ENCODE measurements at regions of chrX and their contacts with region 1.

Region 1: GRCh38 chrX:10189317-10190268 is 32.8 kb downstream of the CLCN4 start:
- DNase-seq: no peak
- ATAC-seq: peak; percentile 87

Region 2: GRCh38 chrX:9927698-9928482 is 261.7 kb before region 1 on chrX:
- intact Hi-C with region 1: no loop called
- DNase-seq: no peak
- ATAC-seq: no peak

Region 3: DNA sequence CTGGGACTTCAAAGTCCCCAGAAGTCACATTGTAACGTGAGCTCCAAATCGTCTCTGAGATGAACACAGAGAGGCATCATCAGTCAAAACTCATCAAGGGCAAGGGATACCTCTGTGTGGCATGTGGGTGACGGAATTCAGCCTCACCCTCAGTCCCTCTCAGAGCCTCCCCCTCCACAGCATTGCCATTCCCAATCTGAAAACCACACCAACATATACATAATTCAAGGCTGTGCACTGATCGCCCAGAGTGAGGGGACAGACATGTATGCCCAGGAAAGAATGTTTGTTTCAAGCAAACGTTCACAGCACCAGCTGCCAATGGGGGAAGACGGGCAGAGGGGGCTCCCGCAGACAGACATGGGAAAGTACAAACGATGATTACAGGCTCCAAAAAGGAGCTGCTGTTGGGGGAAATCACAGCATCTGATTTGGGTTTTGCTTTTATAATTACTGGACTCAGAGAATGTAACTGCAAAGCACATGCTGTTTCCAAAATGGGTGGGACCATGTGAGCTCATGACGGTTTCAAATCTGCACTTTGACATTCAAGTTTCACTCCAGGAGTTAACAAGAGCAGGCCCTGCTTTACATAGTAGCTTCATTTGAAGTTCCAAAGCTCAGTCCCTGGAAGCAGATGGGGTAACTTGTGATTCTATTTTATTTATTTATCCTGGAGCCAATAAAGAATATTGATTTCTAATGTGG is 55.5 kb after region 1 on chrX:
- intact Hi-C with region 1: no loop called
- DNase-seq: no peak
- ATAC-seq: no peak

Region 4: GRCh38 chrX:10326578-10326977 is 137.0 kb after region 1 on chrX:
- intact Hi-C with region 1: loop called (anchors 2 kb)
- DNase-seq: no peak
- ATAC-seq: no peak

Region 5: DNA sequence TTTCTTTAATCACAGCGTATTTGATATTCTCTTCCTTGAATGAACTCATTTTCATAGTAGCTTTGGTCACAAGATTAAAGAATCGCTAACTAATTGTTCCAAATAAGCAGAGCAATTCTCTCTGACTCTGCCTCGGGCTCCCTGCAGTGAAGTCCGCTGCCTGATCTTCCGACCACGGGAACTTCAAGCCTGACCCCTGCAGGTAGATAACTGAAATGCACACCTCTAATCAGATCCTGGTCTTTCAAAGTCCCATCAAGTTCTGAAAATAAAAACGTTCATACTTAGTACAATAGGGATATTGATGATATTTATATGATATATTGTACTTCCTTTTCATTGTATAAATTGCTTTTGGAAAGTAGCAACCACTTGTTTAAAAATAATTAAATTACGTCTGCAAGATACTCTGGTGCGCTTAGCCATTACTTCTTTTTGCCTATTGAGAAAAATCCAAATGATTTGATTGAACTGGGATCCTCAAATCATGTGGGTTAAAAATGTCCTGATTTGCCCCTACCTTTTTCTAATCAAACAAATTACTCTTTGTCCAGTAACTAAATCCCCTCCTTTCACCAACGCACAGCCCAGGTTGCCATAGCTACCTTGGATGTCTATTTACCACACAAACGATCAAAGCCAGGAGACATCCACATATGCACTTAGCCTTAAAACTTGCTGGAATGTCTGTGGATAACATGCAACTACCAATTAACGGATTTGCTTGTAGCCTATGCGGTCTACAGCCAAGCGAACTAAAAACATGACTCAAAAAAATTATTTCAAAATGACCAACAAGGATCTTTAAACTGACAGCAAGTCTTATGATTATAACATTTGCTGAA is 426.6 kb after region 1 on chrX:
- intact Hi-C with region 1: loop called (anchors 5 kb)
- DNase-seq: no peak
- ATAC-seq: peak; percentile 58

Region 6: GRCh38 chrX:10636337-10636736 is 446.7 kb after region 1 on chrX:
- intact Hi-C with region 1: loop called (anchors 1 kb)
- DNase-seq: no peak
- ATAC-seq: peak; percentile 77

Region 7: DNA sequence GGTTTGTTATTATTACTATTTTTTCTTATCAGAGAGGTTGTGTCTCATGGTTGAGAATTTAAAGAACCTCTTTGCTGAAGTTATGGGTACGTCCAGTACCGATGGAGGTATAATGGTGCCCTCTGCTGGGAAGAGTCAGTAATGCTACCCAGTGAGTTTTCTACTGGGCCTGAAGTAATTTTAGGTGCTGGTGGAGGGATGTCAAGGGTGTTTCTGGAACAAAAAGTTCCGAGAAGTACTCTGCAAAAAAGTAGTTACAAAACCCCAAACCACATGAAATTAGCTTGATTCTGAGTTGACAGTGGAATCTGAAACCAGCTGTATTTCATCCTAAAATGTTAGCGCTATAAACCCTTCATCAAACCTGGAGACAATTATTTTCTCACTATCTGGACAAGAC is 533.3 kb after region 1 on chrX:
- intact Hi-C with region 1: loop called (anchors 2 kb)
- DNase-seq: no peak
- ATAC-seq: no peak

Region 8: GRCh38 chrX:10769195-10769594 is 579.6 kb after region 1 on chrX:
- intact Hi-C with region 1: loop called (anchors 2 kb)
- DNase-seq: no peak
- ATAC-seq: no peak